ENCODE measurements at regions of chr5 and their contacts with region 1.

Region 1: DNA sequence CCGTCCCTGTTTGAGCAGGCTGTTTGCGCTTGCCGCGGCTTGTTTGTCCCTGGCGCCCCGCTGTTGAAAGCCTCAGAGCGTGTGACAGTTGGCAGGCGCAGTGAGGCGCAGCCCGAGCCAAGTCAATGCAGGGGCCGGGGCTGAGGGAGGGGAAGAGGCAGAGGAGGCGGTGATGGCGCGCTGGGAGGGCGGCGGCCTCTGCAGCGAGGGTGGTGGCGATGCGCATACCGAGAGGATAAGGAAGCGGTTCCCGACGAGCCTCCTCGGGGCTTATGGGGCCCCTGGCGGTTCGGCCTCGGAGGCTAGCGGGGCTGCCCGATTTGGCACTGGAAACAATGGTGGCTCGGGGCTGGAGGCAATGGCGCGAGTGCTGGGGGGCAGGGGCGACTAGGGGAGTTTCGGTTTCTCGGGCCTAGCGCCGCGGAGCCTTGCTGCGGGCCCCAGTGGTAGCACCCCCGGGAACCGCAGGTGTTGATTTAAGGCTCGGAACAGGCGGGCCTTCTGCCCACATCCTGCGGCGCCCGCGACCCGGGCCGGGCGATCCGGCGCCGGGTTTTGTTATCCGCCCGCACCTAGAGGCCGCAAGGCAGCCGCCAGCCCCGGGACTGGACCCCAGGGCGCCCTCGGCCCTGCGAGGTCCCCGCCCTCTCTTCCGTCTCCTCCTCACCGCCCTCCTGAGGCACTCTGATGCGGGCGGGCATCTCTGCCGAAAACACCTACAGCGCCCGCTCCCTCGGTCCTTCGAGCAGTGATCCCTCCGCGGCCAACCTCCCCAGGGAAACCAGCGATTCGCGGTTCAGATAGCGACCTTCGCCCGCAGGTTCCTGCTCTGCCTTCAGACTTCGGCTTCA is 947 bp upstream of the LNPEP start:
- DNase-seq: peak; percentile 92 to 98 (median 97)
- ATAC-seq: peak; percentile 81
- H3K4me3 ChIP-seq: peak overlapping the region; percentile 93
- H3K4me3 Mint-ChIP-seq: peak overlapping the region; percentile 84 to 100 (median 94)
- H3K27ac ChIP-seq: peak overlapping the region; percentile 86
- H3K27ac Mint-ChIP-seq: peak overlapping the region; percentile 95 to 99 (median 97)
- H3K4me1 ChIP-seq: peaks cover 34 to 46% of the 10 kb centered on the region in 2 donors
- H3K4me1 Mint-ChIP-seq: peaks cover 53 to 70% (median 64%) of the 10 kb centered on the region in 7 donors
- H3K27me3 ChIP-seq: no peaks in the 10 kb centered on the region
- H3K27me3 Mint-ChIP-seq: no peaks in the 10 kb centered on the region

Region 2: DNA sequence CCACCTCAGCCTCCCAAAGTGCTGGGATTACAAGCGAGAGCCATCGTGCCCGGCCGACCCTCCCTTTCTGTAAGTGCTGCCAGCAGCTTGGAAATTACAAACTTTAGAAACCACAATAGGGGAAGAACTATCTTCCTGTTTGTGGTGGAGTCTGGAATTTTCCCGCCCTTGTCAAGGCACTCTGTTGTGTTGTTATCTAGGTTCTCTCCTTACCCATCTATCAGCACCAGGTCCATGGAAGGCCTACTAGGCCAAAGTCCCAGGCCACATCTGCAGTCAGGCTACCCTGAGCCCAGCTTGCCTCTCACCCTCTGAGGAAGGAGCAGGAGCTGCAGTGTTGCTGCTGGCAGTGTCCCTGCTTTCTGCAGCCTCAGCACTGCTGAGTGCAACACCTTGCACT is 1865.0 kb before region 1 on chr5:
- CTCF ChIA-PET with region 1: no interaction called
- POLR2A ChIA-PET with region 1: no interaction called
- intact Hi-C with region 1: no loop called
- DNase-seq: no peak
- ATAC-seq: peak; percentile 49
- H3K4me3 ChIP-seq: no peak overlapping the region
- H3K4me3 Mint-ChIP-seq: no peak overlapping the region
- H3K27ac ChIP-seq: no peak overlapping the region
- H3K27ac Mint-ChIP-seq: no peak overlapping the region
- H3K4me1 ChIP-seq: no peaks in the 10 kb centered on the region
- H3K4me1 Mint-ChIP-seq: peaks cover 0 to 9% (median 0%) of the 10 kb centered on the region in 7 donors
- H3K27me3 ChIP-seq: no peaks in the 10 kb centered on the region
- H3K27me3 Mint-ChIP-seq: peaks cover 0 to 18% (median 2%) of the 10 kb centered on the region in 5 donors

Region 3: GRCh38 chr5:95646554-95647431 is 1288.1 kb before region 1 on chr5 and contains the start of gene RFESD:
- CTCF ChIA-PET with region 1: no interaction called
- POLR2A ChIA-PET with region 1: no interaction called
- intact Hi-C with region 1: loop called in 1 of 2 experiments (anchors 1 kb)
- DNase-seq: peak; percentile 84 to 94 (median 90)
- ATAC-seq: peak; percentile 98
- H3K4me3 ChIP-seq: peak within 1 kb of the TSS; percentile 80
- H3K4me3 Mint-ChIP-seq: peak within 1 kb of the TSS; percentile 84 to 93 (median 88)
- H3K27ac ChIP-seq: peak within 1 kb of the TSS; percentile 80
- H3K27ac Mint-ChIP-seq: peak within 1 kb of the TSS; percentile 71 to 95 (median 89)
- H3K4me1 ChIP-seq: peaks cover 0 to 18% of the 10 kb centered on the region in 2 donors
- H3K4me1 Mint-ChIP-seq: peaks cover 7 to 53% (median 40%) of the 10 kb centered on the region in 7 donors
- H3K27me3 ChIP-seq: no peaks in the 10 kb centered on the region
- H3K27me3 Mint-ChIP-seq: no peaks in the 10 kb centered on the region
- total RNA-seq, gene RFESD: 2.2 to 9.2 (median 6.5) TPM

Region 4: DNA sequence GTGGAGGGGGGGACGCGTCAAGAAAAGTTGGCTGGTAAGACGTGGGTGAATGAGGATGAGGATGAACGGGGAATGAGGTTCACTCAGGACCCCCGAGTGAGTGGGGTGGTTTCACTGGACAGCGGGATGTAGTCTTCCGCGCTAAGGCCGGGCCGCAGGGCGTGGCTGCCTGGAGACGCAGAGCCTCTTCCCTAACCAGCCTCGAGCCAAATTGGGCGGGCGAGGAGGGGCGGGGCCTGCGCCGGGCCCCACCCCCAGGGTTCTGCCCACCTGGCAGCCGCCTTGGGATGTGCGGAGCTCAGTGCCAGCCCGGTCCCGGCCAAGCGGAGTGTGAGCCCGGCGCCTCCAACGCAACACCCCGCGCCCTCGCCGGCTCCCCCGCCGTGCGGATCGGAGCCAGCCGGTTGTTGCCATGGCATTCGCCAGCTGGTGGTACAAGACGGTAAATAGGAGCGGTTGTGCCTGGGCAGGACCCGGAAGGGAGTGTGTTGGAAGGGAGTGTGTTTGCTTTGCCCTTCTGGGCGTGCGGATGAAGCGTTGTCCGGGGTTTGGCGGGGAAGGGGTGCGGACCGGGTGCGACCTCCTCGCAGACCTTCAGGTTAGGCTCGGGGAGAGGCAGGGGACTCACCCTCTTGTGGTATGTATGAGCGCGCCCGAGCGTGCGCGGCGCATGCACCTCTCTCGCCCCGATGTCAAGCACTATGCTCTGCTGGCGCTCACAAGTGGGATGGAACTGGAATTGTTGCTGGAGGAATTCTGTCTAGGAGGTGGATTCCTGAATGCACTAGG is 272.0 kb before region 1 on chr5:
- CTCF ChIA-PET with region 1: no interaction called
- POLR2A ChIA-PET with region 1: interaction called, 7 read pairs
- intact Hi-C with region 1: loop called (anchors 1 kb)
- DNase-seq: peak; percentile 72 to 90 (median 82)
- ATAC-seq: peak; percentile 84
- H3K4me3 ChIP-seq: peak overlapping the region; percentile 86
- H3K4me3 Mint-ChIP-seq: peak overlapping the region; percentile 86 to 100 (median 95)
- H3K27ac ChIP-seq: peak overlapping the region; percentile 87
- H3K27ac Mint-ChIP-seq: peak overlapping the region; percentile 76 to 99 (median 95)
- H3K4me1 ChIP-seq: peaks cover 20 to 26% of the 10 kb centered on the region in 2 donors
- H3K4me1 Mint-ChIP-seq: peaks cover 30 to 64% (median 50%) of the 10 kb centered on the region in 7 donors
- H3K27me3 ChIP-seq: no peaks in the 10 kb centered on the region
- H3K27me3 Mint-ChIP-seq: peaks cover 0 to 14% (median 0%) of the 10 kb centered on the region in 5 donors

Region 5: DNA sequence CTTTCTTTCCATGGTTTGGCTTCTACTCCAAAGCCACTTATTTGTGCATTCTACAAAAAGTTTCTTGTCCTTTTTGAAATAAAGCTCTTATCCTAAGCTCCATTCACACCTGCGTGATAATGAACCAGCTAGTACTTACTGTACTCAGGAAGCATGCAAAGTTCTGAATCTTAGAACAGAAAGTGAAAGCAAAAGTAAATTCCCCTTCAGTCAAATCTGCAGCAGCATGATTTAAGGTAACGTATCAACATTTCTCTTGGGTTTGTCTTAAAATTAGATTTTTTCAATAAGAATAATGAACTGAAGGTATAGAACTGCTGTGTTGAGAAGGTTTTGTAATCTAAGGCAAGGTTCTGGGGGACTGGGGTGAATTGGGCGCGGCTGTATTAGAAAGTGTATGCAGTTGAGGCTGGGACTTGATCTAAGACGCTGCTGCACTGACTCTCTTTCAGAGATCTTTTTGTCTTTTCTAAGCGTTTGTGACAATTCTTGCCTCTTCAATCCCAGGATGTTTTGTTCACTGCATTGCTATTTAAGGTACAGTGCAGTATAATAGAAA is 58.6 kb before region 1 on chr5 and contains the start of gene ERAP2:
- CTCF ChIA-PET with region 1: interaction called, 7 read pairs
- POLR2A ChIA-PET with region 1: interaction called, 85 read pairs
- intact Hi-C with region 1: loop called (anchors 1 kb)
- DNase-seq: peak in 7 of 9 donors; percentile 53 to 73 (median 64)
- ATAC-seq: peak; percentile 79
- H3K4me3 ChIP-seq: peak within 1 kb of the TSS; percentile 85
- H3K4me3 Mint-ChIP-seq: peak within 1 kb of the TSS; percentile 81 to 99 (median 96)
- H3K27ac ChIP-seq: peak within 1 kb of the TSS; percentile 80
- H3K27ac Mint-ChIP-seq: peak within 1 kb of the TSS; percentile 91 to 99 (median 97)
- H3K4me1 ChIP-seq: peaks cover 26 to 56% of the 10 kb centered on the region in 2 donors
- H3K4me1 Mint-ChIP-seq: peaks cover 44 to 76% (median 73%) of the 10 kb centered on the region in 7 donors
- H3K27me3 ChIP-seq: no peaks in the 10 kb centered on the region
- H3K27me3 Mint-ChIP-seq: no peaks in the 10 kb centered on the region
- total RNA-seq, gene ERAP2: 42.5 to 158 (median 97.2) TPM

Region 6: DNA sequence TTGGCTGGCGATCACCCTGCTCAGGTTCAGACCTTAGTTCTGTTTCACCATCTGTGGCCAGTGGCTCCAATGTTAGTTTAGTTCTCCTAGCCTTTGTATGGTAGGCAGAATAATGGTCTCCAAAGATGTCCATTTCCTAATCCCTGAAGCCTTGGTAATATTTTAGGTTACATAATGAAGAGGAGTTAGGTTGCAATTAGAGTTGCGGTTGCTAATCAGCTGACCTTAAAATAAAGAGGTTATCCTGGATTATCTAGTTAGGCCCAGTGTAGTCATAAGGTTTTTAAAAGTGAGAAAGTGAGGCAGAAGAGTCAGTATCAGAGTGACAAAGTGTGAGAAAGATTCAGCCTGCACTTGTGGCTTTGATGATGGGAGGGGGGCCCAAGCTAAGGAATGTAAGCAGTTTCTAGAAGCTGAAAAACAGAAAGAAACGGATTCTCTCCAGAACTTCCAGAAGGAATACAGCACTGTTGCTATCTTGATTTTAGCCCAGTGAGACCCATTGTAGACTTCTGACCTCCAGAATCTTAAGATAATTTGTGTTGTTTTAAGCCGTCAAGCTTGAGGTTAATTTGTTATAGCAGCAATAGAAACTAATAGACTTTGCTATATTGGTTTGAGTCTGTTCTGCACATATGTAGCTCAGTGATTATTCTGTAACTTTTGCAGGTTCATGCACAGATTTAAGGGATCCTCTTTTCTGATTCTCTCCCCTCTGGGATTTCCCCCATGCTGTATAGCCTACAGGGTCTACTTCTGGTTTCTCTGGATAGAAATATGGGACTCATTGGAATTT is 22.5 kb after region 1 on chr5:
- CTCF ChIA-PET with region 1: interaction called, 4 read pairs
- POLR2A ChIA-PET with region 1: interaction called, 14 read pairs
- intact Hi-C with region 1: loop called (anchors 1 kb)
- DNase-seq: no peak
- ATAC-seq: peak; percentile 23
- H3K4me3 ChIP-seq: peak overlapping the region; percentile 2
- H3K4me3 Mint-ChIP-seq: peak overlapping the region in 9 of 10 donors; percentile 42 to 77 (median 65)
- H3K27ac ChIP-seq: peak overlapping the region; percentile 48
- H3K27ac Mint-ChIP-seq: peak overlapping the region; percentile 75 to 97 (median 89)
- H3K4me1 ChIP-seq: peaks cover 44 to 68% of the 10 kb centered on the region in 2 donors
- H3K4me1 Mint-ChIP-seq: peaks cover 42 to 91% (median 82%) of the 10 kb centered on the region in 7 donors
- H3K27me3 ChIP-seq: no peaks in the 10 kb centered on the region
- H3K27me3 Mint-ChIP-seq: no peaks in the 10 kb centered on the region

Region 7: GRCh38 chr5:97019435-97020117 is 84.6 kb after region 1 on chr5:
- CTCF ChIA-PET with region 1: no interaction called
- POLR2A ChIA-PET with region 1: interaction called, 4 read pairs
- intact Hi-C with region 1: loop called in 1 of 2 experiments (anchors 5 kb)
- DNase-seq: no peak
- ATAC-seq: no peak
- H3K4me3 ChIP-seq: no peak overlapping the region
- H3K4me3 Mint-ChIP-seq: no peak overlapping the region
- H3K27ac ChIP-seq: no peak overlapping the region
- H3K27ac Mint-ChIP-seq: peak overlapping the region in 2 of 9 donors; percentile 59 to 62
- H3K4me1 ChIP-seq: peaks cover 0 to 9% of the 10 kb centered on the region in 2 donors
- H3K4me1 Mint-ChIP-seq: peaks cover 14 to 50% (median 32%) of the 10 kb centered on the region in 7 donors
- H3K27me3 ChIP-seq: no peaks in the 10 kb centered on the region
- H3K27me3 Mint-ChIP-seq: no peaks in the 10 kb centered on the region

Region 8: DNA sequence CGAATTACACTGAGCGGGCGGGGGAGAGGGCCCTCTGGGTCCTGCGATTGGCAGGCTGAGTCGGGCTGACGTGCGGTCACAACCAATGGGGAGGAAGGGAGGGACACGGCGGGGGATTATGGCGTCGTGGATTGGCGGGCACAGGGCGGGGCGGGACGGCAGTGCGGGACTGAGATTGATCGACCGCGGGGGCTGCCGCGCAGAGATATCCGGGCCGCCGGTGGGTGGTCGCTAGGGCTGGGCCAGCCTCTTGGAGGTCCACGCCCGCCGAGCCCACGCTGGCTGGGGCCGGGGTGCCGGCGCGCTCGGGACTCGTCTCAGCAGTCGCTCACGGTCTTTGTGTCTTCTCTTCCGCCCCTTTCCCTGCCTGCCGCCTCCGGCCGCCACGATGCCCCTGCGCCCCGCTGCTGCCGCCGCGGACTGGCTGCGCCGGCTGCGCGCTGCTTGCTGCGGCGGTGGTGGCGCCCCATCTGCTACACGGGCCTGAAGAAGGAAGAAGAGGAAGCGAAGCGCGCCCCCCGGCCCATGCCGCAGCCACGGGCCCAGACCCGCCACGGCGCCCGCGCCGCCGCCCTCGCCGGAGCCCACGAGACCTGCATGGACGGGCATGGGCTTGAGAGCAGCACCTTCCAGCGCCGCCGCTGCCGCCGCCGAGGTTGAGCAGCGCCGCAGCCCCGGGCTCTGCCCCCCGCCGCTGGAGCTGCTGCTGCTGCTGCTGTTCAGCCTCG is 1838.7 kb after region 1 on chr5 and contains the start of gene RGMB:
- CTCF ChIA-PET with region 1: no interaction called
- POLR2A ChIA-PET with region 1: no interaction called
- intact Hi-C with region 1: loop called in 1 of 2 experiments (anchors 10 kb)
- DNase-seq: peak; percentile 63 to 93 (median 88)
- ATAC-seq: peak; percentile 92
- H3K4me3 ChIP-seq: peak within 1 kb of the TSS; percentile 88
- H3K4me3 Mint-ChIP-seq: peak within 1 kb of the TSS; percentile 89 to 100 (median 98)
- H3K27ac ChIP-seq: peak within 1 kb of the TSS; percentile 61
- H3K27ac Mint-ChIP-seq: peak within 1 kb of the TSS; percentile 75 to 98 (median 95)
- H3K4me1 ChIP-seq: peaks cover 19 to 28% of the 10 kb centered on the region in 2 donors
- H3K4me1 Mint-ChIP-seq: peaks cover 44 to 72% (median 65%) of the 10 kb centered on the region in 7 donors
- H3K27me3 ChIP-seq: peaks cover 0 to 4% of the 10 kb centered on the region in 2 donors
- H3K27me3 Mint-ChIP-seq: peaks cover 0 to 83% (median 7%) of the 10 kb centered on the region in 5 donors
- total RNA-seq, gene RGMB: 0.41 to 22.4 (median 18.7) TPM

Measured in naive thymus-derived CD4-positive, alpha-beta T cell (primary cell).